Right ventricle myocardium inferior (tissue), 1 donor: ENCODE measurements at regions of chr6 and their contacts with region 1.

Region 1: DNA sequence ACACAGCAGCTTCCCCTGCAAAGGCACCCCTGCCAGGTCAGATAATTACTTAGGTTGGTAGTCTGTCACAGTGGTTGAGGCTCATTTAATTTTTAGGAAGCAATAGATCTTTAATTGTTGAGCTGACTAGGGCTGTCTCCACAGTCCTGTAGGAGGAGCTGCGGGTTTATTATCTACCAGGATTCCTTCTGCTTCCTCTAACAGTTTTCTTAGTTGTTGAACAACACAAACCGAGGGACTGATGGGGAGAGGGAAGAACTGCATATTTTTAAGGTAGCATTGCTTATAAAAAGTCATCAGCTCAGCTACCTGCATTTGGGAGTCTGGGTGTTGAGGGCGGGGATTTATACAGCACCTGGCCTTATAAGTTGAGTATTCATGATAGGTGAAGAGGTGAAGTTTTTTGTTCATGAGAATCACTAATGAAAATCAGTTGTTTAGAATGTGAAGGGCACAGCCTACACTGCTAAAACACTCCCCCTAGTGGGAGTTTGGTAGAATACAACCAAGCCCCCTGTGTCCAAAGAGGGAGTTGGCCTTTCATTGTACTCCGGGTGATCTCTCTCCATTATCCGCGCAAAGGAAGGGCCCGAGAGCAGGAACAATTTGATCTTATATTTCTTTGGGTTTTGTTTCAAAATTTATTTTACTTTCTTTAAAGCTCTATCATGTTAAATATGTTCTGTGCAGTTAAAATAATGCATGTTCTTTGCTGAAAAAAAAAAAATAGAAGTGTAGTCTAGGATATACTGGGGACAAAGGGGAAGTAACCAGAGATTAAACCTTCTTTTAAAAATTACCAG is 69.6 kb downstream of the SSR1 start:
- DNase-seq: no peak
- ATAC-seq: peak; percentile 51

Region 2: GRCh38 chr6:6556738-6557505 is 686.5 kb before region 1 on chr6:
- intact Hi-C with region 1: loop called (anchors 10 kb)
- DNase-seq: no peak
- ATAC-seq: peak; percentile 74

Region 3: DNA sequence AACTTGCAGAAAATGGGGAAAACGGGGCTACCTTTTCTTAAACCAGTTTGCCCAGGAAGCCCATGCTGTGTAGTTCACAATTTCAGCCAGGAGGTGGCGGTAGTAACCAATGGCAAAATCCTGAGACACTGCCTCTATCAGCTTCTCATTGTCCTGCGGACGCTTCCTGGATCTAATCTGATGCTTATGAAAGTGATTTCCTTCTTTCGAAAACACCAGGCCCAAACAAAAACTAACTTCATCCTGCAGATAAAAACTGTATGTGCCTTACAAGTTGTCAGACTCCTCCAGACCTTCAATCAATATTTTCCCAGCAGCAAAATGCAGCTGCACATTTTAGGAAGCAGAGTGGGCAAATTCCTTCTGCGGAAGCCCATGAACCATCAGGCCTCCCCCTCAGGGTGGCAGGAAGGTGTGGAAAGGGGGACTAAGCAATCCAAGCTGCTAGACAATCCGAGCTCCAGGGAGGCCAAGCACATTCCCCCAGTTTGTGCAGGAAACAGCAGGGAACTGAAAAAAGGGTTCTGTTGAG is 566.4 kb before region 1 on chr6:
- intact Hi-C with region 1: loop called (anchors 5 kb)
- DNase-seq: no peak
- ATAC-seq: peak; percentile 71

Region 4: GRCh38 chr6:7124636-7125035 is 118.7 kb before region 1 on chr6:
- intact Hi-C with region 1: no loop called
- DNase-seq: no peak
- ATAC-seq: no peak

Region 5: GRCh38 chr6:7261032-7261841 is 17.9 kb after region 1 on chr6:
- intact Hi-C with region 1: no loop called
- DNase-seq: peak; percentile 95
- ATAC-seq: peak; percentile 98

Region 6: DNA sequence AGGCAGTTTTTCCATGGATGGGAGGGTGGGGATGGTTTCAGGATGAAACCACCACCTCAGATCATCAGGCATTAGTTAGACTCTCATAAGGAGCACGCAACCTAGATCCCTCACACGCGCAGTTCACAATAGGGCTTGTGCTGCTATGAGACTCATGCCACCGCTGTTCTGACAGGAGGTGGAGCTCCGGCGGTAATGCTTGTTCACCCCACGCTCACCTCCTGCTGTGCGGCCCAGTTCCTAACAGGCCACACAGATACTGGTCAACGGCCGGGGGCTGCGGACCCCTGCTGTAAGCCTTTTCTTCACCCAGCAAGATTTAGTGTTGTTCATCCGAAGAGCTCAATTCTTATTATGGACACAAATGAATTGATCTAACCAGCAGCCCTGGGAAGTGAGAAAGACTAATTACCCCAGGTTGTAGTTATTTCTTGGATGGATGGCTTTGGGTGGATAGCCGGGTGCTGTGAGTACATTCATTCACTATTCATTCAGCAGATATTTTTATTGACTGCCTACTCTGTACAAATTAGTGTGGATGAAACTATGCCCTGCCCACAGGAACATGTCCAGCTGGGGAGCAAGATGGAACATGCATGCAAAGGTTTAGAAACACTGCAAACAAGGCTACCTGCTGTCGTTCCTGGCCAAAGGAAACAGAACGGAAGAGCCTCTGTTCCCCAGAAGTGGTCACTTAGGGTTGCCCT is 203.4 kb after region 1 on chr6:
- intact Hi-C with region 1: no loop called
- DNase-seq: no peak
- ATAC-seq: no peak

Region 7: GRCh38 chr6:7684843-7685242 is 441.5 kb after region 1 on chr6:
- intact Hi-C with region 1: no loop called
- DNase-seq: no peak
- ATAC-seq: no peak